MCF 10A (cell line): ENCODE measurements at regions of chr5 and their contacts with region 1.

Region 1: GRCh38 chr5:141664732-141665461 is 13.7 kb upstream of the FCHSD1 start:
- DNase-seq: peak; percentile 83
- H3K4me3 Mint-ChIP-seq: no peak overlapping the region
- H3K27ac Mint-ChIP-seq: no peak overlapping the region
- H3K4me1 Mint-ChIP-seq: peaks cover 4% of the 10 kb centered on the region
- H3K27me3 Mint-ChIP-seq: no peaks in the 10 kb centered on the region
- CTCF ChIP-seq: peak; percentile 94

Region 2: GRCh38 chr5:141650851-141651727 is 13.8 kb before region 1 on chr5 and contains the start of gene FCHSD1:
- CTCF ChIA-PET with region 1: interaction called, 14 read pairs
- POLR2A ChIA-PET with region 1: interaction called, 5 read pairs
- intact Hi-C with region 1: no loop called
- DNase-seq: peak; percentile 87
- H3K4me3 Mint-ChIP-seq: peak within 1 kb of the TSS; percentile 95
- H3K27ac Mint-ChIP-seq: peak within 1 kb of the TSS; percentile 74
- H3K4me1 Mint-ChIP-seq: peaks cover 35% of the 10 kb centered on the region
- H3K27me3 Mint-ChIP-seq: no peaks in the 10 kb centered on the region
- CTCF ChIP-seq: no peak
- total RNA-seq, gene FCHSD1: 21.2 and 22.1 TPM in 2 replicates

Region 3: DNA sequence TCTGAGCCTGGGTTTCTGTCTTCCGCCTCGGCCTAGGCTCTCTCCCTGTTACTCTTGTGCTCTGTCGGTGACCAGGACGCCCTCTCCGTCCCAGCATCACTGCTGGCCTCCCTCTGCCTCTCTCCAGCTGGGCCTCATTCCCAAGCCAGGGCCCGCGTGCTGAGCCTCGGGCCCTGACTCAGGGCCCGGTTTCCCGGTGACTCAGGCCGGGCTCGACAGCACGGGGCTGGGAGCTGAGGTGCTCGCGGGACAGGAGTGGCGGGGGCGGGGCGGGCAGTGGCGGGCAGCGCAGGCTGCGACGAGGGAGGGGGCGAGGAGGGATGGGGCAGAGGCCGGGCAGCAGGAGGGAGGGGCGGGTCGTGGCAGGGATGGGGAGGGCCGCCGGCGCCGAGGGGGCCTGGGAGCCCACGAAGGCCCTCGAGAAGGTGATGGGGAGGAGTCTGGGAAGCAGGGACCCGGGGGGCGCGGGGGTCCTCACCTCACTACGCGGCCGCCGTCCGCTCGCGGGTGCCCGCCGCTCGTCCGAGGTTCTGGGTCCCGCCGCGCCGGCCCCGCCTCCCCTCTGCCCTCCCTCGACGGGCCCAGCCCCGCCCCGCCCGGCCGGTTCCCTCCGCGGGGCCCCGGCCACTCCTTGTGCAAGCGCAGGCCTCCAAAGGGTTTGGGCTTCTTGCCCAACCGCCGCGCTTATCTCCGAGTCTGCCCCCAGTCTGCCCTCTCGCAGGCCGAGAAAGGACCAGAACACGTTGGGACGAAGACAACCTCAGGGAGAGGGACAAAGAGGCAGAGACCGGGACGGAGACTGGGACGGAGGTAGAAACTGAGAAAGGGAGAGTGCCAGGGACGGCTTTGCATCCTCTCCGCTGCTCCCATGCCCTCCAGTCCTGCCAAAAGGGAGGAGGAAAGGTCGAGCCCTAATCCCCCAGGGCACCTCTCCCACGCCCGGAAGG is 17.1 kb after region 1 on chr5 and contains the start of gene ARAP3:
- CTCF ChIA-PET with region 1: interaction called, 18 read pairs
- POLR2A ChIA-PET with region 1: interaction called, 4 read pairs
- intact Hi-C with region 1: no loop called
- DNase-seq: peak; percentile 93
- H3K4me3 Mint-ChIP-seq: peak within 1 kb of the TSS; percentile 76
- H3K27ac Mint-ChIP-seq: peak within 1 kb of the TSS; percentile 93
- H3K4me1 Mint-ChIP-seq: peaks cover 14% of the 10 kb centered on the region
- H3K27me3 Mint-ChIP-seq: no peaks in the 10 kb centered on the region
- CTCF ChIP-seq: no peak
- total RNA-seq, gene ARAP3: 19.8 and 22.8 TPM in 2 replicates

Region 4: GRCh38 chr5:141747152-141748141 is 82.5 kb after region 1 on chr5:
- CTCF ChIA-PET with region 1: no interaction called
- POLR2A ChIA-PET with region 1: no interaction called
- intact Hi-C with region 1: no loop called
- DNase-seq: peak; percentile 61
- H3K4me3 Mint-ChIP-seq: no peak overlapping the region
- H3K27ac Mint-ChIP-seq: no peak overlapping the region
- H3K4me1 Mint-ChIP-seq: no peaks in the 10 kb centered on the region
- H3K27me3 Mint-ChIP-seq: peaks cover 77% of the 10 kb centered on the region
- CTCF ChIP-seq: no peak